Stomach (tissue), 19 donors: ENCODE measurements at regions of chr5 and their contacts with region 1.

Region 1: DNA sequence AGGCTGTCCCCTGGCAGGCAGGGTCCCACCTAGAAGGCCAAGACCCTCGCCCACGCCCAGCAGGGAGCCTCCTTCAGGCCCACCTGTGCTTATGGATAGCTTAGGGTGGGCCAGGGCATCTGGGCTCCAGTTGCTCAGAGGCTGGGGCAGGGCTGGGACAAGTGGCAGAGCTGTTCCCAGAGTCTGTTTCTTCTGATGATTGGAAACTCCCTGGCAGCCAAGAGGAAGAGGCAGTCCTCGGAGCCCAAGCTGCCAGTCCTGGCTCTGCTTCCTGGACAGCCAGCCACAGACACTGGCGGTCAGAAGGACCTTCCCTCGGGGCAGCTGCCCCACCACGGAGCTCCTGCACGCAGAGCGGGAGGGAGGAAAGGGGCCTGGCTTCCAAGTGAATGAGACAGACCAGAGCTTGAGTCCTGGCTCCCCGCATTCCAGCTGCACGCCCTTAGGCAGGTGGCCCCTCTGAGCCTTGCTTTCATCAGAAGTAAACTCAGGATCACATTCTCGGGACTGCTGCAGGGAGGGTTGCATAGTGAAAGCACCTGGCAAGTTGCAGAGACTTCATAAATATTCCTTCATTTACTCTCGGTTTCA is 37.9 kb upstream of the GABRP start:
- DNase-seq: peak; percentile 65 to 69
- H3K4me3 ChIP-seq: no peak overlapping the region
- H3K27ac ChIP-seq: peak overlapping the region; percentile 67 to 84 (median 71)
- H3K4me1 ChIP-seq: peaks cover 33 to 56% (median 41%) of the 10 kb centered on the region in 4 donors
- H3K27me3 ChIP-seq: peaks cover 0 to 29% (median 7%) of the 10 kb centered on the region in 3 donors
- CTCF ChIP-seq: no peak
- EP300 ChIP-seq: no peak
- POLR2A ChIP-seq: no peak

Region 2: DNA sequence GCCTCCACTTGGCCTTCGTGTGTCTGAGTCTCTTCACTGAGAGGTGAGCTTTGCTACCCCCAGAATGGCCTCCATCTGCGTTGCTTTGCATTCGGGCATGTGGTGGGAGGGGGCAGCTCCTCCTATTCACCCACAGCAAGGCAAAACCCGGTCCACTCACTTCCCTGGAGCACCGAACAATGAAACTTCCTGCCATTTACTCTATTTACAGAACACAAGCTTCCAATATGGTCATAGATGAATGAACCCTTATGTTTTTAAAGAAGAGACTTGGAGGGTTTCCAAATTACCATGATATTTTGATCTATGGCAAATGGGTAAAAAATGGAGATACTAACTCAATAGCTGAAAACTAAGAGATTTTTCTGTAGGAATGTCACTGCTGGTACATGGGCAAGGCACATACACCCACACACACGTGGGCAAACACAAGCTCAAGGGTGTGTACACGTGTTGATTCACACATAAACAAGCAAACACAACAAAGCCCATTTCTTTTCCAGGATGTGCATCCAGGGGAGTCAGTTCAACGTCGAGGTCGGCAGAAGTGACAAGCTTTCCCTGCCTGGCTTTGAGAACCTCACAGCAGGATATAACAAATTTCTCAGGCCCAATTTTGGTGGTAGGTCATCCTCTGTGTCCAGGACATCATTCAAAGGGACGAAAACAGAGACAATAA is 43.2 kb after region 1 on chr5:
- intact Hi-C with region 1: loop called (anchors 2 kb)
- DNase-seq: no peak
- H3K4me3 ChIP-seq: no peak overlapping the region
- H3K27ac ChIP-seq: no peak overlapping the region
- H3K4me1 ChIP-seq: peaks cover 0 to 5% (median 2%) of the 10 kb centered on the region in 4 donors
- H3K27me3 ChIP-seq: no peaks in the 10 kb centered on the region
- CTCF ChIP-seq: no peak
- EP300 ChIP-seq: no peak
- POLR2A ChIP-seq: no peak